Body of pancreas (tissue), 4 donors: ENCODE measurements at regions of chr4 and their contacts with region 1.

Region 1: GRCh38 chr4:159175085-159175988 is 72.5 kb downstream of the RAPGEF2 start:
- DNase-seq: peak; percentile 56 to 68 (median 60)
- ATAC-seq: peak; percentile 91
- H3K4me3 ChIP-seq: no peak overlapping the region
- H3K27ac ChIP-seq: peak overlapping the region in 3 of 4 donors; percentile 5 to 11 (median 10)
- H3K4me1 ChIP-seq: peaks cover 34% of the 10 kb centered on the region
- H3K27me3 ChIP-seq: no peaks in the 10 kb centered on the region
- CTCF ChIP-seq: peak; percentile 56 to 87 (median 84)
- POLR2A ChIP-seq: no peak

Region 2: GRCh38 chr4:158729716-158730559 is 445.4 kb before region 1 on chr4:
- intact Hi-C with region 1: loop called (anchors 10 kb)
- DNase-seq: peak; percentile 67 to 79 (median 74)
- ATAC-seq: peak; percentile 86
- H3K4me3 ChIP-seq: no peak overlapping the region
- H3K27ac ChIP-seq: no peak overlapping the region
- H3K4me1 ChIP-seq: no peaks in the 10 kb centered on the region
- H3K27me3 ChIP-seq: no peaks in the 10 kb centered on the region
- CTCF ChIP-seq: peak; percentile 75 to 97 (median 93)
- POLR2A ChIP-seq: no peak

Region 3: DNA sequence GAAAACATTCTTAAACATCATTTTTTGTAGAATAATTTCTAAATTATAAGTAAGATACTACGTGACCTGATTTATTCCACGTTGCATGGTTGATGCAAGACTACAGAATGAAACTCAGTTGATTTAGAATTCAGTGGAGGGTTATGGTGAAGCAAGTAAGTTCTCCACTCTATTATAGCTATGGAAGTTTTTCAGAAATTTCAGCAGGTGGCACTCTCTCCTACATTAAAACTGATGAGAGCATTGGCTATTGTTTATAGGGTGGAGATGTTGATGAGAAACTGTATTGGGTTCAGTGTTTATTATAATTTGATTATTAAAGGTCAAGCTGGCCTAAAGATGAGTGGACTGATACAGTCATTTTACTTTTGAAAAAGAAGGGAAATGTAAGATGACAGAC is 318.5 kb before region 1 on chr4:
- intact Hi-C with region 1: loop called (anchors 10 kb)
- DNase-seq: no peak
- ATAC-seq: peak; percentile 65
- H3K4me3 ChIP-seq: no peak overlapping the region
- H3K27ac ChIP-seq: no peak overlapping the region
- H3K4me1 ChIP-seq: no peaks in the 10 kb centered on the region
- H3K27me3 ChIP-seq: no peaks in the 10 kb centered on the region
- CTCF ChIP-seq: peak; percentile 11 to 60 (median 49)
- POLR2A ChIP-seq: no peak

Region 4: GRCh38 chr4:159410076-159410777 is 234.9 kb after region 1 on chr4:
- intact Hi-C with region 1: no loop called
- DNase-seq: no peak
- ATAC-seq: no peak
- H3K4me3 ChIP-seq: no peak overlapping the region
- H3K27ac ChIP-seq: no peak overlapping the region
- H3K4me1 ChIP-seq: no peaks in the 10 kb centered on the region
- H3K27me3 ChIP-seq: no peaks in the 10 kb centered on the region
- CTCF ChIP-seq: no peak
- POLR2A ChIP-seq: no peak